ENCODE measurements at regions of chr3 and their contacts with region 1.

Region 1: GRCh38 chr3:173690542-173690941 is 293.0 kb downstream of the NLGN1 start:
- DNase-seq: peak; percentile 34
- H3K4me3 Mint-ChIP-seq: peak overlapping the region; percentile 55
- H3K27ac Mint-ChIP-seq: peak overlapping the region; percentile 66
- H3K4me1 Mint-ChIP-seq: peaks cover 41% of the 10 kb centered on the region
- H3K27me3 Mint-ChIP-seq: no peaks in the 10 kb centered on the region
- CTCF ChIP-seq: no peak

Region 2: GRCh38 chr3:173395412-173396181 is 294.9 kb before region 1 on chr3:
- CTCF ChIA-PET with region 1: no interaction called
- intact Hi-C with region 1: loop called (anchors 5 kb)
- DNase-seq: peak; percentile 88
- H3K4me3 Mint-ChIP-seq: peak overlapping the region; percentile 77
- H3K27ac Mint-ChIP-seq: peak overlapping the region; percentile 95
- H3K4me1 Mint-ChIP-seq: peaks cover 23% of the 10 kb centered on the region
- H3K27me3 Mint-ChIP-seq: peaks cover 28% of the 10 kb centered on the region
- CTCF ChIP-seq: no peak

Region 3: GRCh38 chr3:173711593-173711992 is 21.1 kb after region 1 on chr3:
- CTCF ChIA-PET with region 1: interaction called, 9 read pairs
- intact Hi-C with region 1: loop called (anchors 2 kb)
- DNase-seq: peak; percentile 71
- H3K4me3 Mint-ChIP-seq: peak overlapping the region; percentile 62
- H3K27ac Mint-ChIP-seq: peak overlapping the region; percentile 94
- H3K4me1 Mint-ChIP-seq: peaks cover 31% of the 10 kb centered on the region
- H3K27me3 Mint-ChIP-seq: no peaks in the 10 kb centered on the region
- CTCF ChIP-seq: no peak

Measured in Calu3 (cell line).